Kidney (tissue), 22 donors: ENCODE measurements at regions of chr3 and their contacts with region 1.

Region 1: GRCh38 chr3:66407611-66408218 is 93.1 kb downstream of the LRIG1 start:
- DNase-seq: peak; percentile 58 to 84 (median 70)
- H3K4me3 ChIP-seq: no peak overlapping the region
- H3K27ac ChIP-seq: no peak overlapping the region
- H3K4me1 ChIP-seq: no peaks in the 10 kb centered on the region
- H3K27me3 ChIP-seq: no peaks in the 10 kb centered on the region
- CTCF ChIP-seq: peak; percentile 82

Region 2: DNA sequence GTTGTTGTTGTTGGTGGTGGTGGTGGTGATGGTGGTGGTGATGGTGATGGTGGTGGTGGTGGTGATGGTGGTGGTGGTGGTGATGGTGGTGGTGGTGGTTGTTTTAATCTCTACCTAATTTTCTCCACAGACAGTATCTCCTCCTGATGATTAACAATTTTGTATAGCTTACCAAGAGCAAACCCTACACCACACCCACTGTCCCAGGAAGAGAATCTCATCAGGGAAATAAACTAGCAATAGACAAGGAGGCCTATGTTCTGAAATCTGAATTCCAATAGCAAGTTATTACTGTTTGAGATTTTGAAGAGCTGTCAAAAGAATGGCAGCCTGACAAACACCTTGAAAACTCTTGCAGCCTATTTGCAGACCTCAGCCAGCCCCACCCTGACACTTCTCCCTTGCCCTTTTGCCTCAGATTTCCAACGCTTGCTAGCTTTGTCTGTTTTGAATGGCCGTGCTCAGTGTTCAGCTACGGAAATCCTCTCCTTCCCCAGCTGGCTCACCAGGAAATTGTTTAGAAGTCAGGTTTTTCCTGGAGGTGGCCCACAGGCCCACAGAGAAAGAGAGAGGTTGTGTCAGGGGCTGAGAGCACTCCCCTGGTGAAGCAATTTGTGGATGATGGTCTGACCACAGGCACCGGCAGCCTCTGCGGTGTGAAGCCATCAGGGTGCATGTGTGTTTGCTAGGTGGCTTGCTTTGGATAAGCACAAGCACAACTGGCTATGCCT is 470.6 kb before region 1 on chr3:
- intact Hi-C with region 1: no loop called
- DNase-seq: peak in 1 of 5 donors; percentile 32
- H3K4me3 ChIP-seq: no peak overlapping the region
- H3K27ac ChIP-seq: no peak overlapping the region
- H3K4me1 ChIP-seq: peaks cover 0 to 4% (median 3%) of the 10 kb centered on the region in 3 donors
- H3K27me3 ChIP-seq: no peaks in the 10 kb centered on the region
- CTCF ChIP-seq: no peak

Region 3: DNA sequence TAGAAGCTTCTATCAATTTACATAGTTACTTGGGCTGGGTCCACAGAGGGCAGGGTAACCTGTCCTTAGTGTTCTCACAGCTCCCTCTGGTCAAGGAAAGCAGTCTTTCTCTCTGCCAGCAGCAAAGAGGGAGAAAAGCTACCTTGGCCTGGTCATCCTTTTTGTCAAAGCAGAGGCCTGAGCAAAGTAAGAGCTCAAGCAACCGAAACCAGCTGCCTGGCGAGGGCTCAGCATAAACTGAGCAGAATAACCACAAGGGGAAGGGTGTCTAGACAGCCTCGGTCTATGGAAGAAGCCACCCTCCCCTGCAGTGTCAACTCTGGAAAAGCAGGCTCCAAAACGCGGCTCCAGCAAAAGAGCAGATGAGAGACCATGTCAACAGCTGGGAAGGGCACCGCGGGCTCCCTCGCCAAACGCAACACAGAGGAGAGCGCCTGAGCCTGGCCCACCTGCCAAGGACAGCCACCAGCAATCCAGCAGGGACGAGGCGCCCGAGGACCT is 75.7 kb after region 1 on chr3:
- intact Hi-C with region 1: no loop called
- DNase-seq: peak in 1 of 5 donors; percentile 77
- H3K4me3 ChIP-seq: no peak overlapping the region
- H3K27ac ChIP-seq: no peak overlapping the region
- H3K4me1 ChIP-seq: peaks cover 0 to 14% (median 12%) of the 10 kb centered on the region in 3 donors
- H3K27me3 ChIP-seq: no peaks in the 10 kb centered on the region
- CTCF ChIP-seq: no peak

Region 4: DNA sequence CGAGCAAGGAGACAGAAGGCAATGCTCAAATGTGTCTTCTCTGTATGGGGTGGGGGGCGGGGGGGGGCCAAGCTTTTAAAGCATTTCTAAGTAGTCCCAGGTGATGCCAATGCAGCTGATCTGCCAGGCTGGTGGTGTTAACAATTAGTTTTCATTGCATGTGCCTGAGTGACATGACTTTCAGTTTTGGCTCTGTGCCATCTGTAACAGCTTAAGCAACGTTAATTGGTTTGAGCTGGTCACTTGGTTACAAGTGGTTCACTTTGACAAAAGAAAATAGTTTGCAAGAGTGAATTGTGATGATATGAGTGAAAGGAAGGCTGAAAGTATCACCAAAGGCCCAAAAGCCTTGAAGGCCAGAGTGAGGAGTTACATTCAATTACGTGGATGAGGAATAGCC is 119.5 kb after region 1 on chr3:
- intact Hi-C with region 1: no loop called
- DNase-seq: no peak
- H3K4me3 ChIP-seq: no peak overlapping the region
- H3K27ac ChIP-seq: no peak overlapping the region
- H3K4me1 ChIP-seq: no peaks in the 10 kb centered on the region
- H3K27me3 ChIP-seq: no peaks in the 10 kb centered on the region
- CTCF ChIP-seq: no peak

Region 5: GRCh38 chr3:66816090-66816761 is 408.5 kb after region 1 on chr3:
- intact Hi-C with region 1: loop called (anchors 10 kb)
- DNase-seq: peak in 3 of 5 donors; percentile 15 to 73 (median 71)
- H3K4me3 ChIP-seq: no peak overlapping the region
- H3K27ac ChIP-seq: no peak overlapping the region
- H3K4me1 ChIP-seq: no peaks in the 10 kb centered on the region
- H3K27me3 ChIP-seq: no peaks in the 10 kb centered on the region
- CTCF ChIP-seq: peak; percentile 38